Right cardiac atrium (tissue), 5 donors: ENCODE measurements at regions of chr19 and their contacts with region 1.

Region 1: DNA sequence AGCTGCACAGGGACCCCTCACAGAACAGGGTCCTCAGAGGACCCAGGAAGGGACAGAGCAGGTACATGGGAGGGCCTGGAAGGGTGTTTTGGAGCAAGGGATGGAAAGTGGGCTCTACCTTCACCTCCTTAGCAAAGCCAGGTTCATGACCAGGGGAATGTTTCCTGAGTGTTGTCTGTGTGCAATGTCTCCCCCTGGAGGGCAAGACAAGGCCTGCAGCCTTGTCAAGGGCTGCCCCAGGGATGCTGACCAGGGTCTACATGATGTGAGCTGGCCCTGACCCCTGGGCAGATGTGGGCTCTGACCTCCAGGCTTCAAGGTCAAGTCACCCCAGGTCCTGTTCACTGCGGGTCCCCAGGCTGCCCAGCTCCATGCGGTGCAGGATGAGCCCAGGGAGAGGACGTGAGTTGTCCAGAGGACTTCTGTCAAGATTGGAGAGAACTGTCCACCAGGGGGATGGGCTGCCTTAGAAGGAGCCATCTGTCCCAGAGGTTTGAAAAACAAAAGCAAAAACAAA is 1.0 kb upstream of the CEACAM1 start:
- DNase-seq: peak; percentile 42 to 81 (median 75)
- ATAC-seq: peak; percentile 81 to 86
- H3K4me3 ChIP-seq: no peak overlapping the region
- H3K27ac ChIP-seq: no peak overlapping the region
- H3K4me1 ChIP-seq: no peaks in the 10 kb centered on the region
- H3K27me3 ChIP-seq: no peaks in the 10 kb centered on the region

Region 2: DNA sequence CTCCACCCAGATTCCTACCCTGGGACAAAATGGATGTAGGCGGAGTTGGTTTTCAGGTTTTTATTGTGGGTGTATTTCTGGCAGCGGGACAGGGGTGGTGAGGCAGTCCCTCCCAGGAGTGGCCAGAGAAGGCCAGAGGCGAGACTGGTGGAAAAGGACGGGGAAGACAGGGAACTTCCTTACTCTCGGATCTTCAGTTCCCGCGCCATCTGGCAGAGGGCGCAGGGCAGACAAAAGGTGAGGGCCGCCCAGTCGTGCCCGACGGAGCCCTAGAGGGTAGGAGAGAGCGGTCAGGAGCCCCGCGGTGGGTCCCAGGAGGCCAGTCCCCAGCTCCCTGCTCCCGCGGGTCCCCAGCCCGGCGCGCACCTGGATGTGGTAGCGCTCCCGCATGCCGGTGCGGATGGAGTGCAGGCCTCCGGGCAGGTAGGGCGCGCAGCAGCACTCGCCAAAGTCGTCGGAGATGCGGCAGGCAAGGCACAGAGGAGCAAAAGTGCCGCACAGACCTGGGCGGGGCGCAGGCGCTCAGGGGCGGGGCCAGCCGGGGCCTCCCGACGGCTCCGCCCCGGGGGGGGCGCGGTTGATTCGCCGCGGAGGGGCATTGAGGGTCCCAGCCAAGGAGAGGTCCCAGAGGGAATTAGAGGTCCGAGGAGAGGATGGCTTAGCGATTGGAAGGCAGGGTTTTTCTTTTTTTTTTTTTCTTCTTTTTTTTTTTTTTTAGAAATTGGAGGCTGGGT is 142.2 kb before region 1 on chr19:
- intact Hi-C with region 1: no loop called
- DNase-seq: peak; percentile 59 to 84 (median 82)
- ATAC-seq: peak; percentile 74 to 79
- H3K4me3 ChIP-seq: peak overlapping the region; percentile 22
- H3K27ac ChIP-seq: no peak overlapping the region
- H3K4me1 ChIP-seq: no peaks in the 10 kb centered on the region
- H3K27me3 ChIP-seq: no peaks in the 10 kb centered on the region

Region 3: GRCh38 chr19:42450314-42450934 is 78.9 kb before region 1 on chr19:
- intact Hi-C with region 1: loop called in 2 of 4 experiments (anchors 2 kb)
- DNase-seq: peak; percentile 78 to 89 (median 78)
- ATAC-seq: peak; percentile 78 to 97
- H3K4me3 ChIP-seq: no peak overlapping the region
- H3K27ac ChIP-seq: no peak overlapping the region
- H3K4me1 ChIP-seq: no peaks in the 10 kb centered on the region
- H3K27me3 ChIP-seq: no peaks in the 10 kb centered on the region